ENCODE measurements at regions of chr1 and their contacts with region 1.

Region 1: GRCh38 chr1:12047120-12047876 is 15.8 kb upstream of the TNFRSF8 start:
- DNase-seq: peak; percentile 72
- H3K4me3 Mint-ChIP-seq: no peak overlapping the region
- H3K27ac Mint-ChIP-seq: no peak overlapping the region
- H3K4me1 Mint-ChIP-seq: peaks cover 31% of the 10 kb centered on the region
- H3K27me3 Mint-ChIP-seq: no peaks in the 10 kb centered on the region

Region 2: DNA sequence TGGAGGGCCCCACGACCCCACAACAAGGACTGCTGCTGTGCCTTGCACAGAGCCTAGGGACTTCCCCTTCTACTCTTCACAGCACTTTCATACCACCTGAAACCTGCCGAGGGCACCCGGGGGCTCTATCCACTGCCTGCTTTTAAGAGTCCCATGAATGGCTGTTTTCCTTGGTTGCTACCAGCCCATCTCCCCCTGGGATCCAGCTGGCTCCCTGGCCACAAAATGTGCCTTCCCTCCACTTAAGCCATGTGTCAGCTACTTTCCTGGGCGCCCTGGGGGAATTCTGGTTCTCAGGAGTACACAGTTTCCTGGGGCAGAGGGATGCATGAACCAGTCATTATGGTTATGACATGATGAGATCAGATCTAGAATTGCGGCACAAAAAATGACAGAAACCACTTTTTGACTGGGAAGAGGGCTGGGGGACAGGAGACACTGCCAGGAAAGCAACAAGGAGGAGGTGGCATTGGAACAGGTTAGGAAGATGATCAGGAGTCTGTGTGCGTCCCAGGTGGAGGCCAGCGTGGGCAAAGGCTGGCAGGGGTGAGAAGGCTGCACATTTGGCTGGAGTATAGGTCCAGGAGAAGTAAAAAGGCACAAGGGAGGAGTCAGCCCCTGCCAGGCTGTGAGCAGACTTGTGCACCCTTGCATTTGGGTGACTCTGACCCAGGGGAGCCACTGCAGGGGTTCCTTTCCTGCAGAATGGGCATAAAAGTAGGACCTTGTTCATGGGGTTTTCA is 12.6 kb after region 1 on chr1:
- intact Hi-C with region 1: loop called (anchors 1 kb)
- DNase-seq: no peak
- H3K4me3 Mint-ChIP-seq: peak overlapping the region; percentile 1
- H3K27ac Mint-ChIP-seq: peak overlapping the region; percentile 44
- H3K4me1 Mint-ChIP-seq: peaks cover 62% of the 10 kb centered on the region
- H3K27me3 Mint-ChIP-seq: no peaks in the 10 kb centered on the region